K562 (cell line): ENCODE measurements at regions of chr2 and their contacts with region 1.

Region 1: DNA sequence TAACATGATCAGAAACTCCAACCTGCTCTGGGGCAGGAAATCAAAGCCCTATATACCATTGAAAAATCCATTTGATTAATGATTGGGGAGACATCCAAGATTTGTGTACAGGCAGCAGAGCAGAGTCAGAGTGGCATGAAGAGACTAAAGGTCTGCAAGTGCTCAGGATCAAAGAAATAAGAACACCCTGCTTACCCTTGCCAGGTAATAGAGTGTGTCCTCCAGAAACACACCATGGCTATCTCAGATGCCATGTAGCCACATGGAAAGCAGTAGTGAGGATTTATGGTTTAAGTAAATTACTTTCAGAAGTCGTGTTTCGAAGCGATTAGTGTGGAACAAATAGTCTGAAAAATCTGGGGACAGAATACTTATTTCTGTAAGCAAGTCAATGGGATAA is 592.9 kb downstream of the SUCLG1 start:
- DNase-seq: no peak
- ATAC-seq: no peak
- H3K4me3 ChIP-seq: no peak overlapping the region
- H3K27ac ChIP-seq: no peak overlapping the region
- H3K4me1 ChIP-seq: no peaks in the 10 kb centered on the region; a peak in 1 of 5 replicates
- H3K27me3 ChIP-seq: no peaks in the 10 kb centered on the region
- CTCF ChIP-seq: no peak
- EP300 ChIP-seq: no peak
- POLR2A ChIP-seq: no peak
- RAD21 ChIP-seq: no peak

Region 2: DNA sequence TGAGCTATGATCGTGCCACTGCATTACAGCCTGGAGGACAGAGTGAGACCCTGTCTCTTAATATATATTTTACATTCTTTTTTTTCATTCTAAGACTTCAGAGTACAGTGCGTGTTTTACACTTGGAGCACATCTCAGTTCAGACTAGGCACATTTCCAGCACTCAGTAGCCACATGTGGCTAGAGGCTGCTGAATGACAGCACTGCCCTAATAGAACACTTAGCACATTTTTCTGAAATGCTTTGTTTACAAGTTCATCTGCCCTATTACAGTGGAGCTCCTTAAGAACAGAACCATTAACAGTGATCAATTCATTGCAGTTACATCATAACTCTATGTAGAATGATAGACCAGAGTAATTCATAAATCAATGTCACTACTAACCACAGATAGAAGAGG is 454.7 kb after region 1 on chr2:
- CTCF ChIA-PET with region 1: no interaction called
- POLR2A ChIA-PET with region 1: no interaction called
- in situ Hi-C with region 1: loop called (anchors 10 kb)
- intact Hi-C with region 1: no loop called
- DNase-seq: no peak
- ATAC-seq: no peak
- H3K4me3 ChIP-seq: no peak overlapping the region
- H3K27ac ChIP-seq: no peak overlapping the region
- H3K4me1 ChIP-seq: no peaks in the 10 kb centered on the region
- H3K27me3 ChIP-seq: no peaks in the 10 kb centered on the region
- CTCF ChIP-seq: no peak
- EP300 ChIP-seq: no peak
- POLR2A ChIP-seq: no peak
- RAD21 ChIP-seq: no peak